Activated CD4-positive, alpha-beta T cell treated with anti-CD3 and anti-CD28 coated beads for 36 hours (primary cell): ENCODE measurements at regions of chr7 and their contacts with region 1.

Region 1: DNA sequence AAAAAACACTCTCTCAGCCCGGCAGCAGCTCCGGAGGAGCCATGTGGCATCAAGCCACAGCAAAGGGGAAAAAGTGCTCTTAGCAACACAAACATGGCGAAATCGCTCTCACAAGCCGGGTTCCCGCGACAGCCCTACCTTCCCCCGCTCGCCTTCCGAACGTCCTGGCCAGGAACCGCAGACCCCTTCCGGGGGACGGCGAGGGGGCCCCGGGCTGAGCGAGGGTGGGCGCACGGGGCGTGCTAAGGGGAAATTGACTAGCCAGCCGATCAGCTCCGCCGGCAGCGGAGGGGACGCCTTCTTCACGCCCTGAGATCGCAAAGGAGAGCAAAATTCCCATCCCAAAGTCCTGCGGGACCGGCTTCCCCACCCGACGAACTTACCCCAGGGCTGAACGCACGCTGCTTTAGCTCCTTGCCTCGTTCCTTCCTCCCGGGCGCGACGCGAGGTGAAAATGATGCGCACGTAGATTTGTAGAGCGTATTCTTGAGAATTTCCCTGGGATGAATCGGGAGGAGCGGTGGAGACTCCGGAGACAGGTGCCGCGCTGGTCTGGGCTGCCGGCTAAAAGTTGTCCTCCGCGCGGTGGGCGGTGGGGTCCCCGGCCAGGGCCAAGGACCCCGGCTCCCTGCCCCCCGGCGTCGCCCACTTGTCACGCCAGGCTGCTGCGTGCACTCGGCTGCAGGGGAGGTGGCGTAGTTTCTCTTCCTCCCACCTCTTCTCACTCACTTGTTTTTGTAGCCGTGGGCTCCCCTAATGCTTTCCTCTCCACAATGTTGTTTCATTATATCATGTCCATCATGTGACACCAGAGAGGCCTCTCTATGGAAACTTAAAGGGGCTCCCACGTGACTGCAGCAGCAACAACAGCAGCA is 220.1 kb upstream of the MKLN1 start:
- DNase-seq: peak; percentile 83
- ATAC-seq: peak; percentile 47
- H3K4me3 Mint-ChIP-seq: peak overlapping the region; percentile 95
- H3K27ac Mint-ChIP-seq: peak overlapping the region; percentile 97
- H3K4me1 Mint-ChIP-seq: peaks cover 66% of the 10 kb centered on the region
- H3K27me3 Mint-ChIP-seq: no peaks in the 10 kb centered on the region

Region 2: DNA sequence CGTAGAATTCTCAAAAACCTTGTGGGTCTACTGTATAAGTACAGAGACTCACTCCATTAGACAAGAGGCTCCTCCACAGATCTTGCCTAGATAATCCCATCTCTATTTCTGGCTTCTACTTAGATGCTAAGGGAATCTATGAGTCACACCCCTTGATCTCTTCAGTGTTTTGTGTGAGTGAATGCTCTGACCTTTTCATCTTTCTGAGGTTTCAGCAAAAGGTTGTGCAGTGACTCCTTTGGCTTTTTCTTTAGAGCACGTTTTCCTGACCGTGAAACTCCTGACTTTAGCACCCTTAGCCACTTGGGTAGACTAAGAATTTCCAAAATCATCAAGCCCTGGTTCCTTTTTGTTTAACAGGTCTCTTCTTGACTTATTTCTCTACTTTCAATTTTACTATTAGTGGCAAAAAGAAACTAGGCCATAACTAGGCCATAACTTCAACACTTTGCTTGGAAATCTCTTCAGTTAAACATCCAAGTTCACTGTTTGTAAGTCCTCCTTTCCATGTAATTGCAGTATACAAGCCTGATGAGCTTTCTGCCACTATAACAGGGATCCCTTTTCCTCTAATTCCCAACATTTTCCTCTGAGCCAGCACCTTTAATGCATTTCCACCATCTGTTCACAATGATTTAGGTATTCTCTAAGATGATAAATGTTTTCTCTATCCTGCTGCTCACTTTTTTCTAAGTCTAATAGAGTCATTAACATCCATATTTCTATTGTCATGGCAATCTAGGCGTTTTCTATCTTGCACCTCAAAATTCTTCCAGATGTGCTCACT is 458.4 kb before region 1 on chr7:
- CTCF ChIA-PET with region 1: no interaction called
- POLR2A ChIA-PET with region 1: no interaction called
- intact Hi-C with region 1: loop called in 1 of 2 experiments (anchors 10 kb)
- DNase-seq: peak; percentile 42
- ATAC-seq: peak; percentile 95
- H3K4me3 Mint-ChIP-seq: peak overlapping the region; percentile 32
- H3K27ac Mint-ChIP-seq: peak overlapping the region; percentile 87
- H3K4me1 Mint-ChIP-seq: peaks cover 33% of the 10 kb centered on the region
- H3K27me3 Mint-ChIP-seq: no peaks in the 10 kb centered on the region

Region 3: GRCh38 chr7:130966246-130967009 is 141.1 kb before region 1 on chr7:
- CTCF ChIA-PET with region 1: interaction called, 5 read pairs
- POLR2A ChIA-PET with region 1: interaction called, 10 read pairs
- intact Hi-C with region 1: loop called in 1 of 2 experiments (anchors 5 kb)
- DNase-seq: peak; percentile 39
- ATAC-seq: peak; percentile 3
- H3K4me3 Mint-ChIP-seq: peak overlapping the region; percentile 11
- H3K27ac Mint-ChIP-seq: peak overlapping the region; percentile 87
- H3K4me1 Mint-ChIP-seq: peaks cover 73% of the 10 kb centered on the region
- H3K27me3 Mint-ChIP-seq: no peaks in the 10 kb centered on the region

Region 4: GRCh38 chr7:131188367-131189339 is 81.1 kb after region 1 on chr7:
- CTCF ChIA-PET with region 1: interaction called, 5 read pairs
- POLR2A ChIA-PET with region 1: interaction called, 6 read pairs
- intact Hi-C with region 1: loop called (anchors 1 kb)
- DNase-seq: peak; percentile 65
- ATAC-seq: peak; percentile 84
- H3K4me3 Mint-ChIP-seq: peak overlapping the region; percentile 58
- H3K27ac Mint-ChIP-seq: peak overlapping the region; percentile 96
- H3K4me1 Mint-ChIP-seq: peaks cover 55% of the 10 kb centered on the region
- H3K27me3 Mint-ChIP-seq: no peaks in the 10 kb centered on the region

Region 5: GRCh38 chr7:131370523-131370968 is 263.0 kb after region 1 on chr7:
- CTCF ChIA-PET with region 1: no interaction called
- POLR2A ChIA-PET with region 1: no interaction called
- intact Hi-C with region 1: loop called (anchors 2 to 5 kb)
- DNase-seq: peak; percentile 30
- ATAC-seq: peak; percentile 64
- H3K4me3 Mint-ChIP-seq: no peak overlapping the region
- H3K27ac Mint-ChIP-seq: no peak overlapping the region
- H3K4me1 Mint-ChIP-seq: peaks cover 70% of the 10 kb centered on the region
- H3K27me3 Mint-ChIP-seq: no peaks in the 10 kb centered on the region